IMR-90 (cell line): ENCODE measurements at regions of chr5 and their contacts with region 1.

Region 1: GRCh38 chr5:56725711-56726411 is 89.5 kb upstream of the MAP3K1 start:
- DNase-seq: peak; percentile 36
- ATAC-seq: no peak; the same call in 1 of the 2 replicates
- H3K4me3 ChIP-seq: no peak overlapping the region
- H3K27ac ChIP-seq: no peak overlapping the region
- H3K4me1 ChIP-seq: no peaks in the 10 kb centered on the region
- H3K27me3 ChIP-seq: 0 out of 2 replicates have a peak, but pooled peaks cover 2% of the 10 kb centered on the region
- CTCF ChIP-seq: no peak
- POLR2A ChIP-seq: no peak
- RAD21 ChIP-seq: no peak

Region 2: DNA sequence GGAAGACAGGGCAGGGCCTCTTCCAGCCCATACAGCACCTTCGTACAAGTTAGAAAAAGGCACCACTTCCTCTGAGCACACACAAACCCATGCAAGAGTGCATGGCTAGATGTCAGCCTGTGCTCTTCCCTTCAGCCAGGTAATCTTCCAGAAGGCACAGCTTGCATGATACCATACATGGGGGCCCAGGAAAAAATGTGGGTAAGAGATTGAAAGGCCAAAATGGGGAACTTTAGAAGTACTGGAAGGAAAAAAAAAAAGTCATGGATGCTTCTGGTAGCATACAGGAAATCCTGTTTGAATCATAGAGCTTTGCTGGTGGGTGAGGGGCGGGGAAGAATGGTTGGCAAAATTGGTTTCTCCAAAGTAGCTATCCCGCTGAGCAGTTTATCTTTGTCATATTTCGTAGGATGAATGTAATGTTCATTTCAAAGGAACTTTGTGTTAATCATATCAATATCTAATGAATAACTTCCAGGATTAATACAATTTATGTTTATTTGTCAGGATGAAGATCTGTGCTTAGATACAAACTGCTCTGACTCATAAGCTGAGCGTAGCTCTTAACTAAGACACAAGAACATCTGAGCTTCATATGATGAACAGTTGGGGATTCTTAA is 11.3 kb after region 1 on chr5:
- CTCF ChIA-PET with region 1: interaction called, 3 read pairs
- POLR2A ChIA-PET with region 1: interaction called, 14 read pairs
- dilution Hi-C with region 1: no loop called
- in situ Hi-C with region 1: no loop called
- intact Hi-C with region 1: no loop called
- DNase-seq: peak; percentile 75
- ATAC-seq: peak; percentile 63
- H3K4me3 ChIP-seq: no peak overlapping the region
- H3K27ac ChIP-seq: no peak overlapping the region
- H3K4me1 ChIP-seq: peaks cover 3% of the 10 kb centered on the region
- H3K27me3 ChIP-seq: no peaks in the 10 kb centered on the region
- CTCF ChIP-seq: no peak
- POLR2A ChIP-seq: no peak
- RAD21 ChIP-seq: no peak